ENCODE measurements at regions of chr4 and their contacts with region 1.

Region 1: DNA sequence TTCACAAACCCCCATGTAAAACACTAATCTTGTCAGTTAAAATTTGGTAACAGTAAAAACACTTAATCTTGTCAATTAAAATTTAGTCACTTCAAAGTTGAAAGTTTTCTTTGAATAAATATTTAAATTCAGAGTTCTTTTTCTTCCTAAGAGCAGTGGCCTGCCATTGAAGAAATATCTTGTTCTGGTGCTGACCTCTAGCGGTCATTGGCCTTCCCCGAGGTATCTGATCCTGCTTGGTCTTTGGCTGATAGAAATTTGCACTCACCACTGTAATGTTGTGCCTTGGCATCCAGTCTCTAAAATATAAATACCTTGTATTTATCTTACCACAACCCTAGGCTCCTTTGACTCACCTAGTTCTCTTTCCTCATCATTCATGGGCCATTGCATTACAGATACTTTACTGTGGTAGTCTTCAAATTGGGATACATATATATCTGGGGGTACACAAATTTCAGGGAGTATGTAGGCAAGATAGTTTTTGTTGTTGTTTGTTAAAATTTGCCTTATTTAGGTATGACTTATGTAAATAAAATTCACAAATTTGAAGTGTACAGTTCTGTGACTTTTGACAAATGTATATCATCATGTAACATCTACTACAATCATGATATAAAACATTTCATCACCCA is 6.7 kb upstream of the ART3 start:
- DNase-seq: peak in 1 of 2 donors; percentile 83
- ATAC-seq: peak; percentile 58 to 83 (median 77)
- H3K4me3 ChIP-seq: no peak overlapping the region
- H3K4me3 Mint-ChIP-seq: no peak overlapping the region
- H3K27ac ChIP-seq: no peak overlapping the region
- H3K27ac Mint-ChIP-seq: no peak overlapping the region
- H3K4me1 ChIP-seq: no peaks in the 10 kb centered on the region
- H3K4me1 Mint-ChIP-seq: no peaks in the 10 kb centered on the region
- H3K27me3 ChIP-seq: no peaks in the 10 kb centered on the region
- H3K27me3 Mint-ChIP-seq: peaks cover 5% of the 10 kb centered on the region in 2 donors
- CTCF ChIP-seq: peak; percentile 80

Region 2: GRCh38 chr4:75895744-75896314 is 171.9 kb before region 1 on chr4:
- intact Hi-C with region 1: loop called (anchors 1 kb)
- DNase-seq: peak in 1 of 2 donors; percentile 75
- ATAC-seq: peak; percentile 59 to 78 (median 62)
- H3K4me3 ChIP-seq: no peak overlapping the region
- H3K4me3 Mint-ChIP-seq: no peak overlapping the region
- H3K27ac ChIP-seq: no peak overlapping the region
- H3K27ac Mint-ChIP-seq: no peak overlapping the region
- H3K4me1 ChIP-seq: no peaks in the 10 kb centered on the region
- H3K4me1 Mint-ChIP-seq: no peaks in the 10 kb centered on the region
- H3K27me3 ChIP-seq: no peaks in the 10 kb centered on the region
- H3K27me3 Mint-ChIP-seq: peaks cover 0 to 3% of the 10 kb centered on the region in 2 donors
- CTCF ChIP-seq: peak; percentile 73

Region 3: DNA sequence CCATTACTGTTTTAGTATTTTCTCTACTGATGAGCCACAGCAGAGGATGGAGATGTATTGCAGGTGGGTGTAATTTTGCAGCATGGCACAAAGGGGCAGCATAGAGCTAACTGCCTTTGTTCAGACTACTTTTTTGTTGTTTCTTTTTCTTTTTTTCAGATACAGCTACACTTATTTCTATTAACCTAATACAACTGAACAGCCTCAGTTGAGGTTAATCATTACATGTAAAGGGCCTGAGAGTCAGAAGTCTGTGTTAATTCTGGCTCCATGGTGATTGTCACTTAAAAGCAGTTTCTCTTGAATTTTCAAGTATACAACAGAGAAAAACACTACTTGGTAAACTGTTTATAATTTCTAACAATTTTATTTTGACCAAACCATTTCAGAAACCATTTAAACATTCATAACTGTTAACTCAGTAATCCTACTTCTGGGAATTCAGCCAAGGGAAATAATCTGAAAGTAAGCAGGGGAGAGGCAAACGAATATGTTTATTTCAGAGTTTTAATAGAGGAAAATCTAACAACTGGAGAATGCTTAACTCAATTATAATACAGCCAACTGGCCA is 151.6 kb before region 1 on chr4:
- intact Hi-C with region 1: loop called (anchors 1 kb)
- DNase-seq: peak; percentile 42 to 68
- ATAC-seq: peak; percentile 72 to 87 (median 75)
- H3K4me3 ChIP-seq: no peak overlapping the region
- H3K4me3 Mint-ChIP-seq: no peak overlapping the region
- H3K27ac ChIP-seq: no peak overlapping the region
- H3K27ac Mint-ChIP-seq: no peak overlapping the region
- H3K4me1 ChIP-seq: no peaks in the 10 kb centered on the region
- H3K4me1 Mint-ChIP-seq: no peaks in the 10 kb centered on the region
- H3K27me3 ChIP-seq: no peaks in the 10 kb centered on the region
- H3K27me3 Mint-ChIP-seq: no peaks in the 10 kb centered on the region
- CTCF ChIP-seq: peak; percentile 82

Region 4: GRCh38 chr4:75995727-75996126 is 72.0 kb before region 1 on chr4:
- intact Hi-C with region 1: loop called (anchors 2 kb)
- DNase-seq: peak in 1 of 2 donors; percentile 74
- ATAC-seq: no peak
- H3K4me3 ChIP-seq: no peak overlapping the region
- H3K4me3 Mint-ChIP-seq: no peak overlapping the region
- H3K27ac ChIP-seq: no peak overlapping the region
- H3K27ac Mint-ChIP-seq: no peak overlapping the region
- H3K4me1 ChIP-seq: peaks cover 6% of the 10 kb centered on the region
- H3K4me1 Mint-ChIP-seq: no peaks in the 10 kb centered on the region
- H3K27me3 ChIP-seq: no peaks in the 10 kb centered on the region
- H3K27me3 Mint-ChIP-seq: peaks cover 2 to 7% of the 10 kb centered on the region in 2 donors
- CTCF ChIP-seq: peak; percentile 77

Region 5: GRCh38 chr4:76120199-76120598 is 52.4 kb after region 1 on chr4:
- intact Hi-C with region 1: no loop called
- DNase-seq: no peak
- ATAC-seq: no peak
- H3K4me3 ChIP-seq: no peak overlapping the region
- H3K4me3 Mint-ChIP-seq: no peak overlapping the region
- H3K27ac ChIP-seq: no peak overlapping the region
- H3K27ac Mint-ChIP-seq: no peak overlapping the region
- H3K4me1 ChIP-seq: no peaks in the 10 kb centered on the region
- H3K4me1 Mint-ChIP-seq: no peaks in the 10 kb centered on the region
- H3K27me3 ChIP-seq: no peaks in the 10 kb centered on the region
- H3K27me3 Mint-ChIP-seq: no peaks in the 10 kb centered on the region
- CTCF ChIP-seq: no peak